ENCODE measurements at regions of chr1 and their contacts with region 1.

Region 1: DNA sequence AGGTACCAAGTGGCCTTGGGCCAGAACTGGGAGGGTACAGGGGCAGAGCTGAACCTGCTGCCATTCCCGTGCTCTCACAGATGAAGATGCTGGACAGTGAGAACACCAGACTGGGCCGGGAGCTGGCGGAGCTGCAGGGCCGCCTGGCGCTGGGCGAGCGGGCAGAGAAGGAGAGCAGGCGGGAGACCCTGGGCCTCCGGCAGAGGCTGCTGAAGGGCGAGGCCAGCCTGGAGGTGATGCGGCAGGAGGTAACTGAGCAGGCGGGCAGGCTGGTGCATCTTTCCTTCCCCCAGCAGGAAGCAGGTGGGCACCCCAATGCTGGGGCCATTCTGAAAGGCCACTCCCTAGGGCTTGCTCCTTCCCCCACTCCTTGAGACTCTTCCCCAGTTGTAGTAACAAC is 21.9 kb downstream of the MFAP2 start:
- DNase-seq: no peak
- ATAC-seq: no peak
- H3K4me3 ChIP-seq: no peak overlapping the region
- H3K27ac ChIP-seq: no peak overlapping the region
- H3K4me1 ChIP-seq: peaks cover 16% of the 10 kb centered on the region
- H3K27me3 ChIP-seq: no peaks in the 10 kb centered on the region
- CTCF ChIP-seq: no peak

Region 2: GRCh38 chr1:17045634-17046333 is 87.3 kb after region 1 on chr1:
- intact Hi-C with region 1: loop called (anchors 10 kb)
- DNase-seq: no peak
- ATAC-seq: peak; percentile 64 to 88
- H3K4me3 ChIP-seq: peak overlapping the region; percentile 37
- H3K27ac ChIP-seq: peak overlapping the region; percentile 31
- H3K4me1 ChIP-seq: peaks cover 13% of the 10 kb centered on the region
- H3K27me3 ChIP-seq: no peaks in the 10 kb centered on the region
- CTCF ChIP-seq: peak; percentile 81

Region 3: DNA sequence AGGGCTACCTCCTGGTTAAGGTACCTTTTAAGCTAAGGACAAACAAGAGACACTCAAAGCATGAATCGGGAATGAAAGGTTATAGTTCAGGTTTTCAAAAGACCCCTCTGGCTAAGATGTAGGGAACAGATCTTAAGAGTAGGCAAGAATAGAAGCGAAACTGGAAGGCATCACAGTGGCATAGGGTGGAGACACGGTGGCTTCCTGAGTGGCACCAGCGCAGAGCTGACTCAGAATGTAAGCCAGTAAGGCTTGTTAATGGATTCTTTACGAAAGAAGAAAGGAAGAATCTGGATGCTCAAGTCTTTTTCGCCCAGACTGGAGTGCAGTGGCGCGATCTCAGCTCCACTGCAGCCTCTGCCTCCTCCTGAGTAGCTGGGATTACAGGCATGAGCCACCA is 434.7 kb after region 1 on chr1:
- intact Hi-C with region 1: no loop called
- DNase-seq: no peak
- ATAC-seq: no peak
- H3K4me3 ChIP-seq: no peak overlapping the region
- H3K27ac ChIP-seq: no peak overlapping the region
- H3K4me1 ChIP-seq: no peaks in the 10 kb centered on the region
- H3K27me3 ChIP-seq: no peaks in the 10 kb centered on the region
- CTCF ChIP-seq: no peak

Measured in lower lobe of right lung (tissue), 2 donors.